Activated CD4-positive, alpha-beta T cell treated with anti-CD3 and anti-CD28 coated beads, Interleukin-2, amount 10 ng/mL, durations not matched to agents 24 days and 14 days (primary cell): ENCODE measurements at regions of chr12 and their contacts with region 1.

Region 1: GRCh38 chr12:14960548-14961465 is 594 bp downstream of the ARHGDIB start:
- DNase-seq: peak; percentile 85
- H3K4me3 Mint-ChIP-seq: peak overlapping the region; percentile 99
- H3K27ac Mint-ChIP-seq: peak overlapping the region; percentile 100
- H3K4me1 Mint-ChIP-seq: peaks cover 60% of the 10 kb centered on the region
- H3K27me3 Mint-ChIP-seq: no peaks in the 10 kb centered on the region

Region 2: DNA sequence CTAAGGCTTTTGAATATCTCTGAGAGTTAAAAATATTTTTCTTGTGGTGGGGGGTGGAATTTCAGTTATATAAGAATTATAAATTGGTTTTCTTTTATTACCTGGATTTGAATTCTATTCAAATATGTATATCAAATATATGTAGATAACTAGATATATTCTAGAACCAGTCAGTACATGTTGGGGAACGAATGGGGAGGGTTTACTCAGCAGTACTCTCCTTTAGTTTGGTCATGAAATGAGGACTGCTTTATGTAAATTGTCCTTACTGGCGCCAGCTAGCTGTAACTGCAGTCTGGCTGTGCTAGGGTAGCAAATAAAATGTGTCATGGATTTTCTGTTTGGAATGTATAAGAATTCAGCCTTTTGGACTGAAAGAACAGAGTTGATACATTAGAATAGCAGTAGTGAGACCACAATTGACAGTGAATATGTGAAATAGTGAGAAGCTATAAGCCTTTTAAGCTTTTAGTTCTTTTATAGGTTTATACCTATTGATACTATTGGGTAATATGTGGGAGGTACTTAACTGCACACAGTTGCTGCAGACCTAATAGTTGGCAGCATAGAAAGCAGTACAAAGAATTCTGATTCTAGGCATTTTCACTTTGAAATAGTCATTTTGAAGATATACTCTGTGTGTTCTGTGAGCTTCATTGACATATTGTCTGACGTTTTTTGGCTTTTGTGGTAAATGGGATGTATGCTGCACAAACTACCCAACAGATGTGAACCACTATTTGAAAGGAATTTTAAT is 566.3 kb before region 1 on chr12:
- intact Hi-C with region 1: loop called (anchors 5 kb)
- DNase-seq: peak; percentile 84
- H3K4me3 Mint-ChIP-seq: peak overlapping the region; percentile 78
- H3K27ac Mint-ChIP-seq: peak overlapping the region; percentile 93
- H3K4me1 Mint-ChIP-seq: peaks cover 59% of the 10 kb centered on the region
- H3K27me3 Mint-ChIP-seq: no peaks in the 10 kb centered on the region

Region 3: DNA sequence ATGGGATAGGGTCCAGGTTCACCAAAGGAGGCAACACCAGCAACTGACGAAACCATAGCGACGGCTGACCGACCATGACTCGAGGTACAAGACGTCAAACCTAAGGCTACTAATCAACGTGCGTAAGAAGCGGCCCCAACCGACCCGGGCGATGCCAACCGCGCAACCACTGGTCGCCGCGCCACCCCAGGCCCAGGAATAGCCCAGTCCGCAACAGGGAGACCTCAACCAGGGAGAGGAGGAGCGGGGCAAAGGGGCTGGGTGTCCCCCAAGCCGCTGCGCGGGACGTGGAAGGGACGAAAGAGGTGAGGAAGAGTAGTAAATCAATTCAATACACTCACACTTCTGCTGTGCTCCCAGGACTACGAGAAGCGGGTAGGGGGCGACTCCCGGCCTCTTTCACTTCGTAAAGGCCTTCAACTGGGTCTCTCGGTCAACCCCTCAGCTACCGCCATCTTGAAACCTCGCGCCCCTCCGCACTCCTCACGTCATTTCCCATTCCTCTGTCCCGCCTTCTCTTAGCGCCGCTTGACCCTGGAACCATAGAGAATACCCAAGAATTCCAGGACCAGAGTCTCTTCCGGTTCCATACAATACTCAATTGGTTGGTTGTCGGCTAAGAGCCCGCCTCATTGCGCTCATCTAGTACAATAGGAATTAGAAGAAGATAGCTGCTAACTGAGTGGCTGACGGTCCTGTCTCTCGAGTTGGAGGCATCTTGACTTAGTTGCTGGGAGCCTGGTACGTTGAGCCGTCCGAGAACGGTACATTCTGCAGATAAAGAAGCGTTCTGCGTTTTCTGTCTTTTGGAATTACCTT is 157.6 kb before region 1 on chr12 and contains the starts of genes C12orf60 and WBP11:
- intact Hi-C with region 1: loop called (anchors 2 kb)
- DNase-seq: peak; percentile 96
- H3K4me3 Mint-ChIP-seq: no peak within 1 kb of the TSS
- H3K27ac Mint-ChIP-seq: no peak within 1 kb of the TSS
- H3K4me1 Mint-ChIP-seq: peaks cover 22% of the 10 kb centered on the region
- H3K27me3 Mint-ChIP-seq: no peaks in the 10 kb centered on the region
- total RNA-seq, gene C12orf60: 2.2 and 3.0 TPM in 2 replicates
- total RNA-seq, gene WBP11: 136 and 138 TPM in 2 replicates

Region 4: GRCh38 chr12:14913381-14913781 is 47.4 kb before region 1 on chr12:
- intact Hi-C with region 1: loop called (anchors 1 kb)
- DNase-seq: no peak
- H3K4me3 Mint-ChIP-seq: no peak overlapping the region
- H3K27ac Mint-ChIP-seq: no peak overlapping the region
- H3K4me1 Mint-ChIP-seq: peaks cover 19% of the 10 kb centered on the region
- H3K27me3 Mint-ChIP-seq: no peaks in the 10 kb centered on the region

Region 5: DNA sequence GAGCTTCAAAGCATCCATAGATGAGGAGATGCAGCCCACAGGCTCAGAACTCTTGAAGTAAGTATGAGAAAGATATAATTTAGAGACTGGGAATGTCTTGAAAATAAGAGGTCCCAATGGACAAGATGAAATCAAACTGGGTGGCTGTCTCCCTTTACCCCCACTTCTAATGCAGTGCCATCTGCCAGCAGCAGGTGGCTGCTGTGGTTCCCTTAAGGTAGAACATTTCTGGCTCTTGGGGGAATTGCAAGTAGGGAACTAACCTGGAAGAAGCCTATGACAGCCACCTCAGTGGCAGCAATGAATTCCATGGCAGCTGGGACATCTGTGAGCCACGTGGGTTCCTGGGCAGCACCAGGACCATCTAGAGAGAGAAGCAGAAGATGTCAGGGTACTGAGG is 23.1 kb before region 1 on chr12:
- intact Hi-C with region 1: no loop called
- DNase-seq: peak; percentile 74
- H3K4me3 Mint-ChIP-seq: no peak overlapping the region
- H3K27ac Mint-ChIP-seq: peak overlapping the region; percentile 27
- H3K4me1 Mint-ChIP-seq: peaks cover 15% of the 10 kb centered on the region
- H3K27me3 Mint-ChIP-seq: no peaks in the 10 kb centered on the region

Region 6: DNA sequence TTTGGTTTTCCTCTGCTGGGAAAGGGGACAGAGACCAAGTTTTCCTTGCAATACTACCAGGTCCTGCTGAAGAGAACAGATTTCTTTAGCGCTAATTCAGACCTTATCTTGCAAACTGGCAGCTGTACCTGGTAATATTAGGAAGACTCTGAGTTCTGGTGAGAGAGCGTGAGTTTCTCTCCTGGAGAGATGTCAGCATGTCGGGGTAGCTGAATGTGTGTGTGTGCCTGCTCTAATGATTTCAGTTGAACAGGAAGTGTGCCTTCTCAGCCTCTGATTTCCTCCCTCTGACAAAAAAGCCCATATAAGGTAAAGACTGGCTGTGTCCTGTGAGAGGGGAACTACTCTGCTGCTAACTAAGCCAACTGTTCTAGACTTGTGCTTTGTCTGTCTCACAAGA is 12.1 kb before region 1 on chr12:
- intact Hi-C with region 1: loop called (anchors 1 kb)
- DNase-seq: peak; percentile 89
- H3K4me3 Mint-ChIP-seq: peak overlapping the region; percentile 79
- H3K27ac Mint-ChIP-seq: peak overlapping the region; percentile 95
- H3K4me1 Mint-ChIP-seq: peaks cover 74% of the 10 kb centered on the region
- H3K27me3 Mint-ChIP-seq: no peaks in the 10 kb centered on the region

Region 7: DNA sequence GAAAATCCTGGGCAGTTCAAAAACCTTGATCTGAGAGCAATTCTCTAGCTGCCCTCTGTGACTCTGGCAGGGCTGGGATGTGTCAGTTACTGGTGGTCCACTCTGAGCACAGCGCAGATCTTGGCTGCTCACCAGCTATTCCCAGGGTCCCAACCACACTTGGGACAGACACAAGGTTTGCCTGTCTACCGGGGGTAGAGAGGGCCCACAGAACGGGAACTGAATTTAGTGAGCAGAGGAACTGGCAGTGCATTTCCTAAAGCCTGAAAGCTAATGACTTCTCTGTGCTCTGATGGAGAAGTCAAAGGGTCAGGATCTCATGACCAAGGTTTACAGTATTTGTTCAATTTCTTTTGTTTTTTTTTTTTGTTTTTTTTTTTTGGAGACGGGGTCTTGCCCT is 14.7 kb after region 1 on chr12:
- intact Hi-C with region 1: no loop called
- DNase-seq: no peak
- H3K4me3 Mint-ChIP-seq: no peak overlapping the region
- H3K27ac Mint-ChIP-seq: no peak overlapping the region
- H3K4me1 Mint-ChIP-seq: peaks cover 33% of the 10 kb centered on the region
- H3K27me3 Mint-ChIP-seq: no peaks in the 10 kb centered on the region

Region 8: DNA sequence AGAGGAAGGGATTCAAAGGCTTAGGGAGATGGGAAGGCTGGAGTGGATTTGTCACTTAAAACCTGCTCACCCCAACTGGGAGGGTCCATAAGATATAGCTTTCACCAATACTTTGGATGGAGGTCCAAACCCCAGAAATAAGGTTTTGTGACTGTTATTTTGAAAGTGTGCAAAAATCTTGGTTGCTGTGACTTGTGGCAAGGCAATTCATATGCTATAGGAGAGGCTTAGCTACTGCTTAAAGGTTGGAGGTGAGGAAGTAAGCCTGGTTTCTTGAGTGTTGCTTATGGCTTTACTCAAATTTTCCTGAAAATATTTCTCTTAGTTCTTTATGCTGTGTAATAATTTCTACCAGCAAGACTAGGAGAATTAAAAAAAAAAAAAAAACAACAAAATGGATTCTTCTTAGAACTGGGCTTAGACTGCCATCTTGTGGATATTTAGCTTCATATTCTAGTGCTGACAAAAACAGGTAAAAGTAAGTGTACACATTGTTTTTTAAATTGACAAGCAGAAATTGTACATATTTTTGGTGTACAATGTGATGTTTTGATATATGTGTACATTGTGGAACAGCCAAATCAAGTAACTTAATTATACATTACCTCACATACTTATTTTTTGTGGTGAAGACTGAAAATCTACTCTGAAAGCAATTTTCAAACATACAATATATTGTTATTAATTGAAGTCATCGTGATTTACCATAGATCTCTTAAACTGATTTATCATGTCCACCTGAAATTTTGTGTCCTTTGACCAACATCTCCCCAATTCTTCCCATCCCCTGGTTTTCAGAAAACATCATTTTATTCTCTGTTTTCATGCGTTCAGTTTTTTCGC is 35.0 kb after region 1 on chr12:
- intact Hi-C with region 1: loop called (anchors 5 kb)
- DNase-seq: peak; percentile 64
- H3K4me3 Mint-ChIP-seq: no peak overlapping the region
- H3K27ac Mint-ChIP-seq: no peak overlapping the region
- H3K4me1 Mint-ChIP-seq: peaks cover 20% of the 10 kb centered on the region
- H3K27me3 Mint-ChIP-seq: peaks cover 24% of the 10 kb centered on the region

Region 9: GRCh38 chr12:15220994-15221885 is 260.4 kb after region 1 on chr12 and contains the start of gene RERG:
- intact Hi-C with region 1: no loop called
- DNase-seq: peak; percentile 94
- H3K4me3 Mint-ChIP-seq: peak within 1 kb of the TSS; percentile 69
- H3K27ac Mint-ChIP-seq: no peak within 1 kb of the TSS
- H3K4me1 Mint-ChIP-seq: peaks cover 7% of the 10 kb centered on the region
- H3K27me3 Mint-ChIP-seq: peaks cover 48% of the 10 kb centered on the region
- total RNA-seq, gene RERG: not detected in 2 replicates

Region 10: GRCh38 chr12:15546102-15546701 is 585.4 kb after region 1 on chr12:
- intact Hi-C with region 1: loop called (anchors 10 kb)
- DNase-seq: peak; percentile 80
- H3K4me3 Mint-ChIP-seq: peak overlapping the region; percentile 58
- H3K27ac Mint-ChIP-seq: peak overlapping the region; percentile 87
- H3K4me1 Mint-ChIP-seq: peaks cover 42% of the 10 kb centered on the region
- H3K27me3 Mint-ChIP-seq: no peaks in the 10 kb centered on the region

Region 11: DNA sequence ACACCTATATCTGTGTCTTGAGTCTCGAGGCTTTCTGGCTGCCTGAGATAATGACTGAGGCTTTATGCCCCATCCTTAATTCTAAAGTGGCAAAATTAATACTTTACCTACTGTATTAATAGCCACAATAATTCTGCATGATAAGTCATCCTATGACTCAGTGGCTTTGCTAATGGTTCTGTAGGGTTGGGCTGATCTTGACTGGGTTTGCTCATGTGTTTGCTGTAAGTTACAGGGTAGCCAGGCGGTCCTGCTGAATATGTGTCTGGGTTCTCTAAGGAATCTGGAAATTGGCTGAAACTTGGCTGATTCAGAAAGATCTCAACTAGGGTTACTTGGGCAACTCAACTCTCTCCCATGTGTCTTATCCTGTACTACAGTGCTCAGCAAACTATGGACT is 1408.3 kb after region 1 on chr12:
- intact Hi-C with region 1: no loop called
- DNase-seq: no peak
- H3K4me3 Mint-ChIP-seq: no peak overlapping the region
- H3K27ac Mint-ChIP-seq: no peak overlapping the region
- H3K4me1 Mint-ChIP-seq: no peaks in the 10 kb centered on the region
- H3K27me3 Mint-ChIP-seq: no peaks in the 10 kb centered on the region